T-cell (primary cell): ENCODE measurements at regions of chr15 and their contacts with region 1.

Region 1: GRCh38 chr15:56016281-56016680 is 22.9 kb upstream of the NEDD4 start:
- DNase-seq: no peak
- ATAC-seq: no peak
- H3K4me3 ChIP-seq: no peak overlapping the region
- H3K4me3 Mint-ChIP-seq: no peak overlapping the region
- H3K27ac ChIP-seq: no peak overlapping the region
- H3K27ac Mint-ChIP-seq: no peak overlapping the region
- H3K4me1 ChIP-seq: no peaks in the 10 kb centered on the region
- H3K4me1 Mint-ChIP-seq: no peaks in the 10 kb centered on the region
- H3K27me3 ChIP-seq: peaks cover 0 to 6% of the 10 kb centered on the region in 2 experiments
- H3K27me3 Mint-ChIP-seq: peaks cover 0 to 3% of the 10 kb centered on the region in 2 donors

Region 2: DNA sequence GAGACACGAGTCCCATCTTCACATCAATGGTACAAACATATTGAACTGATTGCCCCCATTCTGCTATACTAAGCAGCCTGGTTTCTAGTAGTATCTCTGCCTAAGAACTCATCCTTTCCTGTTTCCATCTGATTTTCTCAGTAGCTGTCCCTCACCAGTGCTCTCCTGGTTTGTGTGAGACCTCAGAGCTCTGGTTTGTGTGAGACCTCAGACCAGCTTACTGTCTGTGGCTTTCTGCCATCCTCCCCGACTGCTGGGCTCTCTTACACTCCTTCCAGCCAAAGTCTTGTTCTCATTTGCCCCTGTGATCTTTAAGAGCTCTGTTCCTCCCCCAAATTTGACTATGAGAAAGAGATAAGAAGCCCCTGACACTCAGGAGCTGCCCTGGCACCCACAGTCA is 18.2 kb after region 1 on chr15:
- CTCF ChIA-PET with region 1: interaction called in 1 of 2 experiments, 11 read pairs
- POLR2A ChIA-PET with region 1: no interaction called
- DNase-seq: no peak
- ATAC-seq: no peak
- H3K4me3 ChIP-seq: no peak overlapping the region
- H3K4me3 Mint-ChIP-seq: no peak overlapping the region
- H3K27ac ChIP-seq: no peak overlapping the region
- H3K27ac Mint-ChIP-seq: no peak overlapping the region
- H3K4me1 ChIP-seq: no peaks in the 10 kb centered on the region
- H3K4me1 Mint-ChIP-seq: peaks cover 10 to 19% (median 18%) of the 10 kb centered on the region in 3 donors
- H3K27me3 ChIP-seq: peaks cover 0 to 3% of the 10 kb centered on the region in 2 experiments
- H3K27me3 Mint-ChIP-seq: no peaks in the 10 kb centered on the region

Region 3: GRCh38 chr15:56058986-56059385 is 42.7 kb after region 1 on chr15:
- CTCF ChIA-PET with region 1: no interaction called
- POLR2A ChIA-PET with region 1: no interaction called
- DNase-seq: no peak
- ATAC-seq: no peak
- H3K4me3 ChIP-seq: no peak overlapping the region
- H3K4me3 Mint-ChIP-seq: no peak overlapping the region
- H3K27ac ChIP-seq: no peak overlapping the region
- H3K27ac Mint-ChIP-seq: no peak overlapping the region
- H3K4me1 ChIP-seq: no peaks in the 10 kb centered on the region
- H3K4me1 Mint-ChIP-seq: no peaks in the 10 kb centered on the region
- H3K27me3 ChIP-seq: peaks cover 0 to 2% of the 10 kb centered on the region in 2 experiments
- H3K27me3 Mint-ChIP-seq: peaks cover 6 to 10% of the 10 kb centered on the region in 2 donors

Region 4: DNA sequence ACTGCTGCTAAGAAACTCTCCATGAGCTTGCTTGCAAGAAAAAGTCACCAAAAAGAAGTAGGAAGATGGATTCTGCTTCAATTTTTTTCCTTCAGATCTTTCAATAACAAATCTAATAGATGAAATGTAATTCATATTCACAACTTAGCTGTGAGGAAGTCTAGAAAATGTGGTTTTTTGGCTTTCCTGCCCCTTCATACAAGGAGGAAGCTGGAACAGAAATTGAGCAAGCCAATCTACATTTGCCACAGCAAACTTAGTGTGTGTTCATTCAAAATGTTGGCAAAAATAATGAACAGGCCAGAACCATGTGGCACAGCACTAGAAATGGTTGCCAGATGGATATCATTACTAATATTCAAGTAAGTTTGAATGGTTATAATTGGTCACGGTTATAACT is 70.3 kb after region 1 on chr15:
- CTCF ChIA-PET with region 1: no interaction called
- POLR2A ChIA-PET with region 1: no interaction called
- DNase-seq: no peak
- ATAC-seq: no peak
- H3K4me3 ChIP-seq: no peak overlapping the region
- H3K4me3 Mint-ChIP-seq: no peak overlapping the region
- H3K27ac ChIP-seq: no peak overlapping the region
- H3K27ac Mint-ChIP-seq: no peak overlapping the region
- H3K4me1 ChIP-seq: no peaks in the 10 kb centered on the region
- H3K4me1 Mint-ChIP-seq: peaks cover 6 to 12% (median 11%) of the 10 kb centered on the region in 3 donors
- H3K27me3 ChIP-seq: no peaks in the 10 kb centered on the region
- H3K27me3 Mint-ChIP-seq: peaks cover 0 to 5% of the 10 kb centered on the region in 2 donors